ENCODE measurements at regions of chr10 and their contacts with region 1.

Region 1: GRCh38 chr10:4767033-4767814 is 58.8 kb upstream of the AKR1E2 start:
- DNase-seq: peak in 1 of 2 donors; percentile 28
- H3K4me3 ChIP-seq: no peak overlapping the region
- H3K27ac ChIP-seq: peak overlapping the region; percentile 21 to 22
- H3K4me1 ChIP-seq: peaks cover 0 to 28% (median 15%) of the 10 kb centered on the region in 4 donors
- H3K27me3 ChIP-seq: no peaks in the 10 kb centered on the region
- CTCF ChIP-seq: peak; percentile 76 to 77

Region 2: DNA sequence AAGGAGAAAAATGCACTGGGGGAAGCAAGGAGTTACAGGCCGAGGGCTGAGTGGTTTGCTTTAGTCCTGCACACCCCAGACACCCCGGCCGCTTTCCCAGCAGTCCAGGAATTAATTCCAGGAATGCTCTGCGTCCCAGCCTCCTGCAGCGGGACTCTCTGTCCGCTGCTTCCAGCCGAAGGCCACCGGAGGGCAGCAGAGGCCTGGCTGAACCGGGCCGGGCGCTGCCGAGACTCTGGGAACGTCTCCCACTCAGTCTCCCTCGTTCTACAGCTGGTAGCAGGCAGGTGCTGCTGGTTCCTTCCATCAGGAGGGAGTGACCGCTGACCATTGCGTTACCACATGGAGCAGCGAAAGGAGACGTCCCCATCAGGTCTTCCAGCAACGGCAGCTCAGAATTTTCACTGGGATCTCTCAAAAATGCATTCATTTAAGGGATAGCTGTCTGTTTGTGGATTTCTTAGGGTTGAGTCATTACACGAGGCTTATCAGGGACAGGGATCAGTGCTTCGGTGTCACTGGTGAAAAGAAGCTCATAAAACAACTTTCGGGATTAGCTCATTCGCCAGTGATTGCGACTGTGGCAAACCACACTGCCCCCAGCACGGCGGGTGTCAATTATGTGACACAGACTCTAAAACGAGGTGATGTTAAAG is 1569.7 kb before region 1 on chr10:
- intact Hi-C with region 1: loop called (anchors 5 kb)
- DNase-seq: peak; percentile 79 to 89
- H3K4me3 ChIP-seq: peak overlapping the region; percentile 17 to 33
- H3K27ac ChIP-seq: peak overlapping the region in 1 of 2 donors; percentile 20
- H3K4me1 ChIP-seq: peaks cover 0 to 22% (median 4%) of the 10 kb centered on the region in 4 donors
- H3K27me3 ChIP-seq: no peaks in the 10 kb centered on the region
- CTCF ChIP-seq: peak; percentile 92 to 95